SK-N-SH (cell line): ENCODE measurements at regions of chr16 and their contacts with region 1.

Region 1: DNA sequence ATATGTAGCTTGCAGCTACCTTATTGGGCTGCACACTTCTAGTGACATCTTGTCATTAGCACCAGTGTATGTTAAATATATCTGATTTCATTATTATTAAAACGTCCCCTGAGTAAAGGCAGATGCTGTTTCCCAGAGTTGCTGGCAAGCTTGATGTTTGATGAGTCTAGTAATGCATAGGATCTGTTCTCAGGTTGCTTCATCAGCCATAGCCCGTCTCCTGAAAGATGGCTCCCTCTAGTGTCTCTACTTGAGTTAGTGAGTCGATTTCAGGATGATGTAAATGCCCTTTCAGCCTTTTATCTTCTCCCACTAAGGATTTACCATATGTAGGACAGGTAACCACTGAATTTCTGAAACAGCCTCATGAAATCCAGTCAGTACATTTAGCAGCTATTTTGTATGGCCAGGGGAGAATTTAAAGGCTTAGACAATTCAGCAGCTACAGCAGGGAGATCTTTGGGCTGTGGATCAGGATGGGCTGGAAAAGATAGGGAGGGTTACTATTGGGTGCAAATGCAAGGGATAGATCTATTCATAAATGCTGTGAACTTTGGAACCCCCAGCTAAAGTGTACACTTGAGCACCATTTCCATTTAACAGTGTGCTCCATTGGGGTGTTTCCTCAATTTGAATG is 376.3 kb downstream of the CNTNAP4 start:
- DNase-seq: peak; percentile 39
- H3K4me3 ChIP-seq: no peak overlapping the region; a peak in 1 of 4 replicates
- H3K27ac ChIP-seq: peak overlapping the region in 1 of 2 experiments; percentile 28; a peak in 1 of 4 replicates
- H3K4me1 ChIP-seq: peaks cover 0 to 16% of the 10 kb centered on the region in 2 experiments; a peak in 2 of 4 replicates
- H3K27me3 ChIP-seq: no peaks in the 10 kb centered on the region
- CTCF ChIP-seq: peak; percentile 64
- EP300 ChIP-seq: peak in 1 of 2 experiments; percentile 67; a peak in 2 of 4 replicates
- RAD21 ChIP-seq: peak; percentile 94

Region 2: GRCh38 chr16:75801307-75801706 is 852.2 kb before region 1 on chr16:
- CTCF ChIA-PET with region 1: interaction called, 15 read pairs
- POLR2A ChIA-PET with region 1: no interaction called
- DNase-seq: no peak
- H3K4me3 ChIP-seq: no peak overlapping the region
- H3K27ac ChIP-seq: no peak overlapping the region
- H3K4me1 ChIP-seq: no peaks in the 10 kb centered on the region
- H3K27me3 ChIP-seq: no peaks in the 10 kb centered on the region
- CTCF ChIP-seq: peak; percentile 41
- EP300 ChIP-seq: no peak
- RAD21 ChIP-seq: peak; percentile 57

Region 3: DNA sequence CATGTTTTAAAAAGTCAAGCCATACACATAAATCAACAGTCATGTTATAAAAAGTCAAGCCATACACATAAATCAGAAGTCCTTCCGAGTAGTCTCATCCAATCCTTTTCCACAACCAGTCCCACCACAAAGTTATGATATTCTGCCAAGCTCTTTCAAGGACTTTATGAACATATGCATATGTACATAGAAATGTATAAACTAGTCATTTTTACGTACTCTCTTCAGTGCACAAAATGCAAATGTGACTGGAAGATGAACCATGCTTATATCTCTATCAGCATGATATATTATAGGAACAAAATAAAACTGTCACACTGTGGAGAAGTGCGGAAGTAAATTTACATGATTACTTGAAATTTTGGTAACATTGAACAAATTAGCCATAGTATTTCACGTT is 175.4 kb before region 1 on chr16:
- CTCF ChIA-PET with region 1: interaction called, 14 read pairs
- POLR2A ChIA-PET with region 1: no interaction called
- DNase-seq: no peak
- H3K4me3 ChIP-seq: no peak overlapping the region
- H3K27ac ChIP-seq: no peak overlapping the region; a peak in 1 of 4 replicates
- H3K4me1 ChIP-seq: peaks cover 0 to 4% of the 10 kb centered on the region in 2 experiments; a peak in 1 of 4 replicates
- H3K27me3 ChIP-seq: no peaks in the 10 kb centered on the region
- CTCF ChIP-seq: no peak
- EP300 ChIP-seq: no peak
- RAD21 ChIP-seq: no peak

Region 4: DNA sequence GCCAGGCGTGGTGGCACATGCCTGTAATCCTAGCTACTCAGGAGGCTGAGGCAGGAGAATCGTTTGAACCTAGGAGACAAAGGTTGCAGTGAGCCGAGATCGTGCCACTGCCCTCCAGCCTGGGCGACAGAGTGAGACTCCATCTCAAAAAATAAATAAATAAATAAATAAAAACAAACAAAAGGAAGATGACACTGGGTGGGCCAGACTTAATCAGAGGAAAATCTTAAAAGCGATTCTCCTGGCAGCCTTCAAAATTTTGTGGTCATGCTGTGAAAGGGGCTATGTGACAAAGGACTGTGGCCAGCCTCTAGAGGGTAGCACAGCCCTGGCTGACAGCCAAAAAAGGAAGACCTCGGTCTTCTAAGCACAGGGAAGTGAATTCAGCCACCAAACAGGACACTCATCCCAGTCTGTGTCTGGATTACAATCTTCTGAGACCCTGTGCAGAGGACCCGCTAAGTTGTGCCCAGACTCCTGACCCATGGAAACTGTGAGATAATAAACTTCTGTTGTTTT is 14.8 kb after region 1 on chr16:
- CTCF ChIA-PET with region 1: interaction called, 16 read pairs
- POLR2A ChIA-PET with region 1: no interaction called
- DNase-seq: no peak
- H3K4me3 ChIP-seq: no peak overlapping the region
- H3K27ac ChIP-seq: no peak overlapping the region
- H3K4me1 ChIP-seq: no peaks in the 10 kb centered on the region; a peak in 1 of 4 replicates
- H3K27me3 ChIP-seq: no peaks in the 10 kb centered on the region
- CTCF ChIP-seq: no peak
- EP300 ChIP-seq: no peak
- RAD21 ChIP-seq: no peak